CD4-positive, alpha-beta T cell (primary cell): ENCODE measurements at regions of chr13 and their contacts with region 1.

Region 1: DNA sequence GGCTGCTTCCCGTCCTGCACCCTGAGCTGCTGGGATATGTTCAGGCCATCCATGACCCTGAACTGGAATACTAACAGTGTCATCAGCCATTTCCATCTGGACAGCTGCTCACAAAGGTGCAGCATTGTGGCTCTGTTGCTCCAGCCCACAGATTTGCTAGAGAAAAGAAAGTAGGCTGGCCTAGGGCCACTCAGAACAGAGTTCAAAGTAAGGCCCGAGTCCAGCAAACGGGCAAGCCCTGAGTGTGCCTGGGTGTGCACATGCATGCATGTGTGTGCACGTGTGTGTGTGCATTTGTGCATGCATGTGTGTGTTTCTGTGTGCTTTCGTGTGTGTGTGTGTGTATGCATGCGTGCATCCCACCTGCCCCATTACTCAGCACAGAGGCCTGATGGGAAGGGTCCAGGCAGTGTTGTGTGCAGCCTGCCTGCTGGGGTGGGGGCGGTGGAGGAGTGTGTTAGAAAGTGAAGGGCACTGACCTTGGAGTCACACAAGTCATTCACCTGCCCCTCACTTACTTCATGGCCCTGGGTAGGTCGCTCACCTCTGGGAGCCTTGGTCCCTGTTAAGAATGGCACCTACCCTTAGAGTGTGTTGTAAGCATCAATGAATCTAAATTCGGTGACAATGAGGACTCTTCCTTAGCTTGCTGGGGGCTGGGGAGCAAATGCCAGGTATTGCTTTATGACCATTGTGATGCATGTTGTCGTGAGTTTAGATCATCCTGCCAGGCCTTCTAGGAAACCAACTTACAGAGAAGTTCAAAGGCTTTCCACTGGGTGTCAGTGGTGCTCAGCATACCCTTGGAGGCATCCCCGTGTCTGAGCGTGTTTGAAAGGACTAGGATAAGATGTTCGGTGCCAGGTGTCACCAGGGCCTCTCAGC is 53.2 kb downstream of the GPR12 start:
- DNase-seq: peak in 8 of 14 experiments; percentile 9 to 63 (median 23)
- ATAC-seq: peak; percentile 69
- H3K4me3 ChIP-seq: no peak overlapping the region
- H3K4me3 Mint-ChIP-seq: no peak overlapping the region
- H3K27ac ChIP-seq: no peak overlapping the region
- H3K27ac Mint-ChIP-seq: no peak overlapping the region
- H3K4me1 ChIP-seq: no peaks in the 10 kb centered on the region
- H3K4me1 Mint-ChIP-seq: no peaks in the 10 kb centered on the region
- H3K27me3 ChIP-seq: peaks cover 0 to 3% of the 10 kb centered on the region in 2 experiments
- H3K27me3 Mint-ChIP-seq: peaks cover 14% of the 10 kb centered on the region
- CTCF ChIP-seq: peak; percentile 56

Region 2: GRCh38 chr13:26656919-26657318 is 50.4 kb before region 1 on chr13:
- CTCF ChIA-PET with region 1: no interaction called
- POLR2A ChIA-PET with region 1: no interaction called
- intact Hi-C with region 1: no loop called
- DNase-seq: no peak
- ATAC-seq: no peak
- H3K4me3 ChIP-seq: no peak overlapping the region
- H3K4me3 Mint-ChIP-seq: no peak overlapping the region
- H3K27ac ChIP-seq: no peak overlapping the region
- H3K27ac Mint-ChIP-seq: no peak overlapping the region
- H3K4me1 ChIP-seq: no peaks in the 10 kb centered on the region
- H3K4me1 Mint-ChIP-seq: no peaks in the 10 kb centered on the region
- H3K27me3 ChIP-seq: peaks cover 0 to 6% of the 10 kb centered on the region in 2 experiments
- H3K27me3 Mint-ChIP-seq: peaks cover 9% of the 10 kb centered on the region
- CTCF ChIP-seq: no peak

Region 3: DNA sequence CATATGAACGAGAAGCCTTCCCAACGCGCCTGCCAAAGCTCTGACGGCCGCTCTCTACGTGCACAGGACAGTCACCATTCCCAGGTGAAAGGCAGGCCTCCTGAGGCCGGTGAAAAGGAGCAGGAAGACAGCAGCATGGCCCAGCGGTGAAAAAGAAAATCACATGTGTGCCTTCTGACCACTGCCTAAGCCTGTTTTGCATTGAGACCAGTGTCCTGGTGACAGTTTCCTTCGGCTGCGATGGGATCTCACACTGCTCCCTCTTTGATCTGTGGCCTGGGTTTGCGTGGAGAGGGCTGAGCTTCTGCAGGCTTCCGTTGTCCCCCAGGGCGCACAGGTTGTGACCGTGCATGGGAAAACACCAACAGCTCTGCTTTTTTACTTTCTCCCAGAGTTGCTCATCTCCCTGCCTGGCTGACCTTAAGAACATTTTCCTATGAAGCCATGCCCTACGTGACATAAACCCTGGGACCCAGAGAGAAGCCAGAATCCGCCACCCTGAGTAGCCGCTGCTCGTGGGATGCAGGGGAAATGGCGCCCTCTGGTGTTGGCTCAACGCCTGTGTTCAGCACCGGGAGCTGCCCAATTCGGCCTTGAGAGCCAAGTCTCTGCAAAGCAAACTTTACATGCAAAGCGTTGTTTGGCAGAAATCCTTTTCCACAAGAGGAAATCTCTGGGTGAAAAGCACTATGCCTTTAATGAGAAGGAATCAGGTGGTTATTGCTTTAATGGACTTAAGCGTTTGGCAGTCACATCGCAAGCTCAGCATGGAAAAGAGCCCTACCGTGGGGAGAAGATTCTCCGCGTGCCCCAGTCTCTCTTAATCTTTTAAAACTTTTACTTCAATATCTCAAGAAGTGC is 165.4 kb after region 1 on chr13:
- CTCF ChIA-PET with region 1: interaction called, 6 read pairs
- POLR2A ChIA-PET with region 1: no interaction called
- intact Hi-C with region 1: loop called in 1 of 2 experiments (anchors 2 kb)
- DNase-seq: peak in 13 of 14 experiments; percentile 11 to 65 (median 28)
- ATAC-seq: no peak
- H3K4me3 ChIP-seq: no peak overlapping the region
- H3K4me3 Mint-ChIP-seq: no peak overlapping the region
- H3K27ac ChIP-seq: no peak overlapping the region
- H3K27ac Mint-ChIP-seq: no peak overlapping the region
- H3K4me1 ChIP-seq: no peaks in the 10 kb centered on the region
- H3K4me1 Mint-ChIP-seq: no peaks in the 10 kb centered on the region
- H3K27me3 ChIP-seq: peaks cover 4 to 26% of the 10 kb centered on the region in 2 experiments
- H3K27me3 Mint-ChIP-seq: peaks cover 16% of the 10 kb centered on the region
- CTCF ChIP-seq: peak; percentile 49

Region 4: DNA sequence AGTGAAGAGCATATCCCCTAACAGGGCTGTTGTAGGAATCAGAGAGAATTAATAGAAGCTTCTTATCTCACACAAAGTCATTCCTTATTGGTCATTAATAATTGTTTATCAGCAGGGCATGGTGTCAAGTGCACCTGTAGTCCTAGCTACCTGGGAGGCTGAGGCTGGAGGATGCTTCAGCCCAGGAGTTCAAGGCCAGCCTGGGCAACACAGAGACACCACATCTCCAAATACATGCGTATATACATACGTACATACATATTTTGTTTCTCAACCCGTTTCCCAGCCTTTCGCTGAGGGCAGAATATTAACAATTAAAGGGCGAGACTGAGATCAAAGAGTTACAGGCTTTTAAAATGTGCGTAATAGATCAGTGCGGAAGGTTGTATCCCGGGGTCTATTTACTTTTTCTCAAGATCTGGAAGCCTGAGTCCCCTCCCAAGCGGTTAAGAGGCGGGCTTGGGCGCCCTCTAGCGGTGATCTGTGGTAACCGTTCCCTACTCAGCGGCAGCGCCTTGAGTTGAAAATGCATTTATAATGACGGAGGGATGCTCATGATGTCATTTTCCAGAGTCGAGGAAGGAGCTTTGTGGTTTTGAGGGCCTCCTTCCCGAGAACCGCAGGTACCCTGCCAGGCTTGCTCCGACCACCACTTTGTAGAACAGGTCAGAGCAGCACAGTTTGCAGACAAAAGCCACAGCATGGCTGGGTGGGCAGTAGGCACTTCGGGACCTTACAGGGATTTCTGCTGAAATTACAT is 222.8 kb after region 1 on chr13:
- CTCF ChIA-PET with region 1: no interaction called
- POLR2A ChIA-PET with region 1: no interaction called
- intact Hi-C with region 1: loop called (anchors 1 kb)
- DNase-seq: peak; percentile 38 to 78 (median 62)
- ATAC-seq: peak; percentile 59
- H3K4me3 ChIP-seq: no peak overlapping the region
- H3K4me3 Mint-ChIP-seq: no peak overlapping the region
- H3K27ac ChIP-seq: no peak overlapping the region
- H3K27ac Mint-ChIP-seq: no peak overlapping the region
- H3K4me1 ChIP-seq: peaks cover 5% of the 10 kb centered on the region
- H3K4me1 Mint-ChIP-seq: no peaks in the 10 kb centered on the region
- H3K27me3 ChIP-seq: peaks cover 2 to 4% of the 10 kb centered on the region in 2 experiments
- H3K27me3 Mint-ChIP-seq: peaks cover 11% of the 10 kb centered on the region
- CTCF ChIP-seq: peak; percentile 96

Region 5: DNA sequence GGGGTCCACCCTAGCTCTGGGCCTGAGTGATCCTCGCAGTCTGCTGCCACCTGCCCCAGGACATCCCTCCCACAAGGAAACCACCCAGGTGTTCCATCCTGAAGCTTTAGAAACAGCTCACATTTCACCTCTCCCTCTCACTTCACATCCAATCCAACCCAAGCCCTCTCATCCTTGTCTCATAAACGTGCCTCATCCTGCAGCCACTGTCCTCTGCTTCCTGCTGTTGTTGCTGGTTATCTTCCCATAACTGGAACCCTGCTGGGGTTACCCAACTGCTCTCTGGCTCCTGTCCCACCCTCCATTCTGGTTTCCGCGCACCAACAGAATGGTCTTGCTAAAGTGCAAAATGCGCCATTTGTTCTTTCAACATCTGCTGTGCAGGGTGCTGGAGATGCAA is 802.7 kb after region 1 on chr13:
- CTCF ChIA-PET with region 1: no interaction called
- POLR2A ChIA-PET with region 1: no interaction called
- intact Hi-C with region 1: no loop called
- DNase-seq: no peak
- ATAC-seq: no peak
- H3K4me3 ChIP-seq: no peak overlapping the region
- H3K4me3 Mint-ChIP-seq: no peak overlapping the region
- H3K27ac ChIP-seq: no peak overlapping the region
- H3K27ac Mint-ChIP-seq: no peak overlapping the region
- H3K4me1 ChIP-seq: no peaks in the 10 kb centered on the region
- H3K4me1 Mint-ChIP-seq: no peaks in the 10 kb centered on the region
- H3K27me3 ChIP-seq: no peaks in the 10 kb centered on the region
- H3K27me3 Mint-ChIP-seq: peaks cover 11% of the 10 kb centered on the region
- CTCF ChIP-seq: no peak